GM10248 (cell line): ENCODE measurements at regions of chr4 and their contacts with region 1.

Region 1: DNA sequence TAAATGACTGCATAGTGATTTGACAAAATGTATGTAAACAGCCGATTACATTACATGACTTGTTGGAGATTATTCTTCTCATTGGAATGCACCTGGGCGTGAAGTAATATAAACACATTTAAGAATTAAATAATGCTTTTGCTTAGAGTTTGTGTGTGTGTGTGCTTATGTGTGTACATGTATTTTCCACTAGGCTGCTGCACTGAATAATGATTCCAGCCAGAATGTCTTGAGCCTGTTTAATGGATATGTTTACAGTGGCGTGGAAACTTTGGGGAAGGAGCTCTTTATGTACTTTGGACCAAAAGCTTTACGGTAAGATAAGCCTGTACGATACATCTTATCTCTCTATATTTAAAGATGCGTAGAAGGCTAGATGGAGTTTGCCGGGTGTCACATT is 12.6 kb downstream of the NEIL3 start:
- DNase-seq: no peak
- CTCF ChIP-seq: no peak

Region 2: GRCh38 chr4:177309522-177310371 is 12.5 kb before region 1 on chr4 and contains the start of gene NEIL3:
- CTCF ChIA-PET with region 1: interaction called, 13 read pairs
- POLR2A ChIA-PET with region 1: no interaction called
- DNase-seq: peak; percentile 94
- CTCF ChIP-seq: no peak

Region 3: GRCh38 chr4:177339477-177340374 is 17.5 kb after region 1 on chr4:
- CTCF ChIA-PET with region 1: interaction called, 20 read pairs
- POLR2A ChIA-PET with region 1: no interaction called
- DNase-seq: peak; percentile 32
- CTCF ChIP-seq: peak; percentile 43